ENCODE measurements at regions of chrX and their contacts with region 1.

Region 1: DNA sequence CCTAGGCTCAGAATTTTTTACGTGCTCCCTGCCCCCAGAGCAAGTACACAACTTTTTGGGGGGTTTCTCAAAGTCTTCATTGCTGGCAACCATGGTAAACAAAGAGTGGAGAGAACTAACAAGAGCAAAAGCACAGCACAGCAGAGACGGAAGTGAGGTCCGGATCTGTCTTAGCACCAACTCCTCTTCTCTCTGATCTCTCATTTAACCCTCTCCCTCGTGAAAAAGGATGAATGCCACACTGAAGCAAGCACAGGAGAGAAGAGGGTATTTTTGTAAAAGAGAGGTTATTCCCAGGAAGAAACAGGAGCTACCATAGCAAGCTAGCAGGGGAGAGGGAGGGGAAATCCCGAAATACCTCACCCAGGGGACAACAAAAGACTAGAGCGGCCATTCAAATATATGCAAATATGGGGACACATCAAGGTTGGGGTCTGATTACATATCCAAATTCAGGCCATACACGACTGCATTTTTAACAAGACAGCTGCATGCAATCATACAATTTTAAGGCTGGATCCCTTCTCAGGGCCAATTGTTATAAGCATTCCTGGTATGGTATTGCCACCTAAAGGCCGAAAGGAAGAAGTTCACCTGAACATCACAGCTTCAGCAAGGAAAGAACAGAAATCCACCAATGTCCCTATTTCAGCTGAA is 46.6 kb downstream of the CD40LG start:
- DNase-seq: peak in 1 of 2 experiments; percentile 43
- H3K4me3 ChIP-seq: no peak overlapping the region
- H3K27ac ChIP-seq: peak overlapping the region; percentile 77
- H3K4me1 ChIP-seq: peaks cover 0 to 3% (median 0%) of the 10 kb centered on the region in 4 experiments; a peak in 2 of 7 replicates
- H3K27me3 ChIP-seq: no peaks in the 10 kb centered on the region
- CTCF ChIP-seq: peak in 2 of 3 experiments; percentile 43 to 58; a peak in 2 of 4 replicates
- EP300 ChIP-seq: no peak
- POLR2A ChIP-seq: no peak
- RAD21 ChIP-seq: peak; percentile 82 to 88

Region 2: DNA sequence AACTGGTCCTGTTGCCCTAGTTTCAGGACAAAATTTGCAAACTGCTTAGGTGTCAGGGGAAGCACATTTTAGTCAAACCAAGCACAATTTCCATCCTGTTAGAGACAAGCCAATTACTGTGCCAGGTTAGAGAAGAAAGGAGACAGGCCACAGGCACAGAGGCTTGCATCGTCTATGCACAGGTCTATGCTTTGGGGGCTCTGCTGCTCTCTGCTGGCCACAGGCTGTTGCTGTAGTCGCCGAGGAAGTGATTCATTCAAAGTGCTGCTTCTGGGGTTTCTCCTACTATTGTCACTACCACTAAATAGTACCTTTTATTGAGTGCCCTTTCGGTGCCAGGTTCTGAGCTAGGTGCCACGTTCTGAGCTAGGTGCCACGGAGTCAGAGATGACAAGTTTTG is 117.0 kb before region 1 on chrX:
- CTCF ChIA-PET with region 1: interaction called, 20 read pairs
- POLR2A ChIA-PET with region 1: interaction called, 5 read pairs
- DNase-seq: peak in 1 of 2 experiments; percentile 60
- H3K4me3 ChIP-seq: no peak overlapping the region
- H3K27ac ChIP-seq: no peak overlapping the region
- H3K4me1 ChIP-seq: no peaks in the 10 kb centered on the region
- H3K27me3 ChIP-seq: no peaks in the 10 kb centered on the region
- CTCF ChIP-seq: peak; percentile 50 to 72 (median 55)
- EP300 ChIP-seq: no peak
- POLR2A ChIP-seq: no peak
- RAD21 ChIP-seq: peak; percentile 71 to 75

Region 3: DNA sequence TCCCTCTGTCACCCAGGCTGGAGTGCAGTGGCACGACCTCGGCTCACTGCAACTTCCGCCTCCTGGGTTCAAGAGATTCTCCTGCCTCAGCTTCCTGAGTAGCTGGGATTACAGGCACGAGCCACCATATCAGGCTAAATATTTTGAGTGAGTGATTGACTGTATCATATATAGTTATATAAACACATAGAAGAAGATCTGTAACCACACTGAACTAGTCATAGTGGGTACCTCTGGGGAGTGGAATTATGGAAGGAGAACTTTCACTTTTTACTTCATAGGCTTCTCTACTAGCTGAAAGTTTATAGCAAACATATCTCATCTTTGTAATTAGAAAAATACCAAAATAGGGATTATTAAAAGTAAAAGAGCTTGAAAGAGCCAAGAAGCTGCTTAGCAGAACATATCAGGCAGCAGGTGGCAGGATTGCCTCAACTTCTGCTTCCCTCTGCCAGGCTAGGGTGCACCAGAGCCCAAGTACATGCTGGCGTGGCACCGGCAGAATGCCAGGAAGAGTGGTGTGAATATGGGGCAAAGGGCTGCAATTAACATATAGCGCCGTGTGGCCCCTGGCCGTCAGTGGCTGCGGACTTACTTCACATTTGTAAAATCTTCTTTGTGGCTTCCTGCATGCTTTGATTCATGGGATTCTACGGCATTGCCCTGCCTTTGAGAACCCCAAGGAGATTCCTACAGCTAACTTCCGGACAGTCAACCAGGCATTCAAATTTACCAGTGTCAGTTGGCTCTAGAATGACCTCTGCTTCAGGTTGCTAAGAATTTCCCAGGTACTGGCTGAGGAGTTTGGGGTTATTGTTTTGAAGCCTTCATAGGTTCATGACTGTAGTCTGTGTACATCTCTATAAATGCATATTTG is 86.0 kb before region 1 on chrX:
- CTCF ChIA-PET with region 1: interaction called, 44 read pairs
- POLR2A ChIA-PET with region 1: interaction called, 4 read pairs
- DNase-seq: peak in 1 of 2 experiments; percentile 42
- H3K4me3 ChIP-seq: no peak overlapping the region
- H3K27ac ChIP-seq: no peak overlapping the region
- H3K4me1 ChIP-seq: no peaks in the 10 kb centered on the region
- H3K27me3 ChIP-seq: no peaks in the 10 kb centered on the region
- CTCF ChIP-seq: peak; percentile 34 to 54 (median 46)
- EP300 ChIP-seq: no peak
- POLR2A ChIP-seq: no peak
- RAD21 ChIP-seq: peak; percentile 73 to 81